Right ventricle myocardium inferior (tissue), 1 donor: ENCODE measurements at regions of chr4 and their contacts with region 1.

Region 1: DNA sequence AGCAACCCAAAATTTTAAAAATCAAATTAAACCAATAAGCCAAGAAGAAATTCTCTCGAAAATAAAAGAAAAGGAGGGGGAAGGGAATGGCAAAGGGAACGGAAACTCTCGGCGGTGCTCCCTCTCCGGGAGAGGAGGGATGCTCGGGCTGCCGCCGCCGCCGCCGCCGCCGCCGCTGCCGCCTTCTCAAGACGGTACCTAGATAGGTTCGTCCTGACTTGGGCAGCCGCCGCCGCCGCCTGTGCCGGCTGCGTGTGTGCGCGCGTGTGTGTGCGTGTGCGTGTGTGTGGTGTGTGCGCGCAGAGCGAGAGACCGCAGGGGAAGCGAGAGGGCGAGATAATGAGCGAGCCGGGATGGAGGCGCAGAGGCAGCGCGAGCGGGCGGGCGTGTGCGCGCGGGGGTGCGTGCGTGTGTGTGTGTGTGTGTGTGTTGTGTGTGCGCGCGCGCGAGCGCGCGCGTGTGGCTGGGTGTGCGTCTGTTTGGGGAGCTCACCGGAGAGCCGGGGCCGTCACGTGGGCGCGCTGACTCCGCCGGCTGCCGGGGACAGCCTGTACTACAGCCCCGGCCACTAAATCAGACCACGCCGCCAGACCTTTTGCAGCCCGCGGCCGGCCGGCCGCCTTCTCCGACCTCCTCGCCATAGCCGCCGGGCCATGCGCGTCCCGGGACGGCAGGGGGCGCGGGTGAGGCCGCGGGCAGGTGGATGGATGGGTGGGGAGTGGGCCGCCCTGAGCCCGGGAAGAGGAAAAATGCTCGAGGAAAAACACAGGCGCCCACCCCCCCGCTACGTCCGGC is 111.6 kb downstream of the DHX15 start:
- DNase-seq: peak; percentile 90
- ATAC-seq: peak; percentile 93

Region 2: GRCh38 chr4:24794916-24795665 is 322.4 kb after region 1 on chr4 and contains the start of gene SOD3:
- intact Hi-C with region 1: loop called (anchors 10 kb)
- DNase-seq: peak; percentile 87
- ATAC-seq: peak; percentile 97
- total RNA-seq, gene SOD3: 63.4 TPM